Endothelial cell of umbilical vein (primary cell): ENCODE measurements at regions of chrX and their contacts with region 1.

Region 1: GRCh38 chrX:134908356-134908755 is 82.4 kb upstream of the SMIM10 start:
- DNase-seq: peak; percentile 67
- H3K4me3 ChIP-seq: no peak overlapping the region
- H3K27ac ChIP-seq: no peak overlapping the region
- H3K4me1 ChIP-seq: no peaks in the 10 kb centered on the region
- H3K27me3 ChIP-seq: no peaks in the 10 kb centered on the region
- CTCF ChIP-seq: peak in 1 of 2 donors; percentile 25
- POLR2A ChIP-seq: no peak

Region 2: GRCh38 chrX:134423615-134424014 is 484.7 kb before region 1 on chrX:
- CTCF ChIA-PET with region 1: no interaction called
- POLR2A ChIA-PET with region 1: no interaction called
- dilution Hi-C with region 1: no loop called
- intact Hi-C with region 1: loop called (anchors 2 kb)
- DNase-seq: peak; percentile 35
- H3K4me3 ChIP-seq: no peak overlapping the region
- H3K27ac ChIP-seq: no peak overlapping the region
- H3K4me1 ChIP-seq: no peaks in the 10 kb centered on the region
- H3K27me3 ChIP-seq: no peaks in the 10 kb centered on the region
- CTCF ChIP-seq: peak in 1 of 2 donors; percentile 19
- POLR2A ChIP-seq: no peak

Region 3: GRCh38 chrX:134782796-134783195 is 125.6 kb before region 1 on chrX:
- CTCF ChIA-PET with region 1: interaction called, 20 read pairs
- POLR2A ChIA-PET with region 1: no interaction called
- dilution Hi-C with region 1: no loop called
- intact Hi-C with region 1: loop called (anchors 2 kb)
- DNase-seq: peak; percentile 54
- H3K4me3 ChIP-seq: no peak overlapping the region
- H3K27ac ChIP-seq: no peak overlapping the region
- H3K4me1 ChIP-seq: no peaks in the 10 kb centered on the region
- H3K27me3 ChIP-seq: no peaks in the 10 kb centered on the region
- CTCF ChIP-seq: peak; percentile 21 to 23
- POLR2A ChIP-seq: no peak

Region 4: GRCh38 chrX:134807039-134807731 is 101.2 kb before region 1 on chrX:
- CTCF ChIA-PET with region 1: interaction called, 3 read pairs
- POLR2A ChIA-PET with region 1: interaction called, 3 read pairs
- dilution Hi-C with region 1: no loop called
- intact Hi-C with region 1: loop called (anchors 1 kb)
- DNase-seq: peak; percentile 94
- H3K4me3 ChIP-seq: peak overlapping the region; percentile 68 to 94 (median 91)
- H3K27ac ChIP-seq: peak overlapping the region; percentile 90
- H3K4me1 ChIP-seq: peaks cover 6% of the 10 kb centered on the region
- H3K27me3 ChIP-seq: no peaks in the 10 kb centered on the region
- CTCF ChIP-seq: no peak
- POLR2A ChIP-seq: peak; percentile 37

Region 5: DNA sequence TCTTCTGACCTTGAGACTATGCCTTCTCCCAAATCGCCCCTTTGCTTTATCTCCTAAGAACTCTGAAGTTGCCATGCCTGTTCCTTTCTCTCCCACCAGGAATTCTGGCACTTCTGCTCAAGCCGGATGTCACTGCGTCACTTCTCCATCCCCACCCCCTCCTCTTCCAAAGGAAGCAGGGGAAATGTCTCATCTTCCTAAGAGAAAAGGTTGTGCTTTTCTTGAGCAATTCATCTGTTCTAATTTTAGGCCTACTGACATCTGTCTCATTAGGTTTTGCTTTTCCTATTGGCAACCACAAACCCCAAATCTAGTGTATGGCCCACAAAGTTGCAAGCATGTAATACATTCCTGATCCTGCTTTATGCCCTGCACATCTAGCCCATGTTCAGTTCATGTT is 87.0 kb before region 1 on chrX:
- CTCF ChIA-PET with region 1: no interaction called
- POLR2A ChIA-PET with region 1: no interaction called
- dilution Hi-C with region 1: no loop called
- intact Hi-C with region 1: loop called (anchors 1 kb)
- DNase-seq: peak; percentile 90
- H3K4me3 ChIP-seq: peak overlapping the region in 1 of 3 experiments; percentile 39
- H3K27ac ChIP-seq: peak overlapping the region; percentile 76
- H3K4me1 ChIP-seq: peaks cover 19% of the 10 kb centered on the region
- H3K27me3 ChIP-seq: no peaks in the 10 kb centered on the region
- CTCF ChIP-seq: no peak
- POLR2A ChIP-seq: no peak

Region 6: GRCh38 chrX:134948333-134949241 is 40.2 kb after region 1 on chrX:
- CTCF ChIA-PET with region 1: no interaction called
- POLR2A ChIA-PET with region 1: no interaction called
- dilution Hi-C with region 1: no loop called
- intact Hi-C with region 1: no loop called
- DNase-seq: peak; percentile 48
- H3K4me3 ChIP-seq: no peak overlapping the region
- H3K27ac ChIP-seq: peak overlapping the region; percentile 72
- H3K4me1 ChIP-seq: peaks cover 19% of the 10 kb centered on the region
- H3K27me3 ChIP-seq: no peaks in the 10 kb centered on the region
- CTCF ChIP-seq: no peak
- POLR2A ChIP-seq: no peak